GM12878 (cell line): ENCODE measurements at regions of chr11 and their contacts with region 1.

Region 1: DNA sequence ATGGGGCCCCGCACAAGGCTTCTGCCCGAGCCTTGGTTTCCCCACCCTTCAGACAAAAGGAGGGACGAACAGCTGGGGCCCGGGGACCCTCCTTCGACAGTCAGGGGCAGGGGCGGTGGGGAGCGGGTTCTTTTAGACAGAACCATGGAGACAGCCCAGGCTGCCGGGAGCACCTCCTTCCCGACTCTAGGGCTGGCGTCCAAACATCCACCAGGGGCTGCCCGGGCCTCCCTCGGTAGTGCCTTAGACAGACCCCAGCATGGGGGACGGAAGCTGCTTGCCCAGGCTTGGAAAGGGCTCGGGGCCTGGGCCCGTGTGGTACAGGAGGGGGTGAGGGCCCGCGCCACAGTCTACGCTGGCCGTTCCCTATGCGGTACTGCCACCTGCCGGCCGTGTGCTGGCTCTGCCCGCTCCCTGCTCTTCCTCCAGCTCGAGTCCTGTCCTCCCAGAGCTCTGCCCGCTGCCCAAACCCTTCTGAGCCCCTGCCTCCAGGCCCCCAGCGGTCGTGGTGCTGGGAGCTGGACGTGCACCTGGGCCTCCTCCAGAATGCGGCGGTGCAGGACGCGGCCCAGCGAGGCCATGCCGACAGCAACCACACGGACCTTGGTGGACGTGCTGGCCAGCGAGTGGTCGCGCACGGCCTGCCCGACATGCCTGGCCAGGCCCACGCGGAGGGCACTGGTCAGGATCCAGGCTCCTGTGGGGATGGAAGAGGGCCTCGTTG is 20.1 kb downstream of the TSSC4 start:
- DNase-seq: no peak
- ATAC-seq: peak; percentile 98
- H3K4me3 ChIP-seq: no peak overlapping the region
- H3K27ac ChIP-seq: no peak overlapping the region
- H3K4me1 ChIP-seq: no peaks in the 10 kb centered on the region
- H3K27me3 ChIP-seq: no peaks in the 10 kb centered on the region
- CTCF ChIP-seq: peak; percentile 75 to 94 (median 93)
- EP300 ChIP-seq: no peak
- POLR2A ChIP-seq: no peak
- RAD21 ChIP-seq: peak; percentile 85

Region 2: GRCh38 chr11:2196970-2197770 is 223.5 kb before region 1 on chr11:
- CTCF ChIA-PET with region 1: interaction called, 8 read pairs
- POLR2A ChIA-PET with region 1: no interaction called
- RAD21 ChIA-PET with region 1: interaction called, 9 read pairs
- SMC1A ChIA-PET with region 1: interaction called, 6 read pairs
- in situ Hi-C with region 1: loop called (anchors 5 kb)
- intact Hi-C with region 1: loop called (anchors 1 kb)
- DNase-seq: no peak
- ATAC-seq: peak; percentile 95
- H3K4me3 ChIP-seq: no peak overlapping the region
- H3K27ac ChIP-seq: no peak overlapping the region
- H3K4me1 ChIP-seq: no peaks in the 10 kb centered on the region
- H3K27me3 ChIP-seq: no peaks in the 10 kb centered on the region; a peak in 1 of 4 replicates
- CTCF ChIP-seq: peak; percentile 78 to 86 (median 85)
- EP300 ChIP-seq: no peak
- POLR2A ChIP-seq: no peak
- RAD21 ChIP-seq: peak; percentile 87

Region 3: DNA sequence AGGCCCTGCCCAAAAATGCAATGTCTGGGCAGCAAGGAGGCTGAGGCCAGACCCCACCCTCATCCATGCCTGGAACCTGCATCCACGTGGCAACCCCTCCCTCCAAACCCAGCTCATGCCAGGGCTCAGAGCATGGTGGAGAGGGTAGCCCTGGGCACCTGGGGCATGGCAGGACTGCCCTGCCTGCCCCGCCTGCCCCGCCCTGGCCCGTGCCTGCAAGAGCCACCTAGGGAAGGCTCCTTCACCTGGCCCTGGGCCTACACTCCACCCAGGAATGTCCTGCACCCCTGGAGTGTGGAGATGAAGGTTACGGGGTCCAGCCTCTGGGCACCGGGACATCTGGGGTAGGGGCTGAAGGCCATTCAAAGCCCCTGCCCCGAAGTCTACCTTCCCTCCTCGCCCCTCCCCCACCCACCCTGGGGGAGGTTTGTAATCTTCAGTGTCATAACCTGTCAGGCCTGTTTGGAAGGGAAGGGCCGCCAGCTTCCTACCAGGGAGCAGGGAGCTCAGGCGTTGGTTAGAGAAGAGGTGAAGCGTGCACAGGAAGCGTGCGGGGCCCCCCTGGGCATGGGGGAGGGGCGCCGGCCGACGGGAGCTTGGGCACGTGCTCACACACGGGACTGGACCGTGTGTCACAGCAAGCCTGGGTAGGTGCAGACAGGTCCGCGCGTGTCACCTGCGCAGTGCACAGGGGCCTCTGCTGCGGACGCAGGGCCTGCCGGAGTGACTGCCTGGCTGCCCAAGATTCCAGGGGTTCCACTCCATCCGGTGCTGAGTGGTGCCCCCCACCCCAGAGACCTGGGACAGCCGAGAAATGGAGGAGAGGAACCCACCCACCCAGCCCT is 218.4 kb before region 1 on chr11:
- CTCF ChIA-PET with region 1: interaction called, 6 read pairs
- POLR2A ChIA-PET with region 1: no interaction called
- RAD21 ChIA-PET with region 1: interaction called, 9 read pairs
- SMC1A ChIA-PET with region 1: interaction called, 6 read pairs
- in situ Hi-C with region 1: loop called (anchors 5 kb)
- intact Hi-C with region 1: loop called (anchors 1 kb)
- DNase-seq: no peak
- ATAC-seq: no peak
- H3K4me3 ChIP-seq: no peak overlapping the region
- H3K27ac ChIP-seq: no peak overlapping the region
- H3K4me1 ChIP-seq: no peaks in the 10 kb centered on the region
- H3K27me3 ChIP-seq: no peaks in the 10 kb centered on the region; a peak in 1 of 4 replicates
- CTCF ChIP-seq: no peak
- EP300 ChIP-seq: no peak
- POLR2A ChIP-seq: no peak
- RAD21 ChIP-seq: no peak

Region 4: DNA sequence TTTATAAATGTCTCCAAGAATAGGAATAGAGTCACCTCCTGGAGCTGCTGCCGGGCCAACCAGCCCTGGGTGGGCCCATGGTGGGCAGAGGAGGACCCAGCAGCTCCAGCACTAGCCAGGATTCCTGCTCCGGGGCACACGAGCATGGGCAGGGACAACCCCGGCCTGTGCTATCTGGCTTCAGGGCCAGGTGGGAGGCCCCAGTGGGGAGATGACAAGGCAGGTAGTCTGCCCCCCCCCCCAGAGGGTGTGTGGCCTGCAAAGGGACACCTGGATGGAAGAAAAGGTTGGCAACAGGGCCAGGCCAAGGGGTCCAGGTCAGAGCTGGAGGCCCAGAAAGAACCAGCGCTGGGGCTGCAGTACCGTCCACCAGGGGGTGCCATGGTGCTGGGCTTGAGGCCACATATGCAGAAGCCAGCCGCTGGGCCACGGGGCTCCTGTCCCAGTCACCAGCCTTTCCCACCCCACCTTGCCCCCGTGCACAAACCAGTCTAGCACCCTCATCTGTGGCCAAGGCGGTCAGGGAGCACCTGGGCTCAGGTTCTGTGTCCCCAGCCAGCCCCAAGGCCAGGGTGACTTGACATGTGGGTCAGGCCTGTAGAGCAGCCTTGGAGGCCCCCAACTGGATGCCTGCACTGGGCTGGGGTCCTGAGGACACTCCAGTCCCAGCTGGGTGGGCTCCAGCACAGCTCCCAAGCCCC is 115.4 kb before region 1 on chr11:
- CTCF ChIA-PET with region 1: interaction called, 271 read pairs
- POLR2A ChIA-PET with region 1: interaction called, 3 read pairs
- RAD21 ChIA-PET with region 1: interaction called, 187 read pairs
- SMC1A ChIA-PET with region 1: interaction called, 60 read pairs
- in situ Hi-C with region 1: loop called (anchors 5 kb)
- intact Hi-C with region 1: loop called (anchors 1 kb)
- DNase-seq: peak; percentile 4
- ATAC-seq: peak; percentile 92
- H3K4me3 ChIP-seq: no peak overlapping the region
- H3K27ac ChIP-seq: no peak overlapping the region
- H3K4me1 ChIP-seq: no peaks in the 10 kb centered on the region
- H3K27me3 ChIP-seq: no peaks in the 10 kb centered on the region; a peak in 1 of 4 replicates
- CTCF ChIP-seq: peak; percentile 76 to 93 (median 84)
- EP300 ChIP-seq: no peak
- POLR2A ChIP-seq: no peak
- RAD21 ChIP-seq: peak; percentile 87

Region 5: DNA sequence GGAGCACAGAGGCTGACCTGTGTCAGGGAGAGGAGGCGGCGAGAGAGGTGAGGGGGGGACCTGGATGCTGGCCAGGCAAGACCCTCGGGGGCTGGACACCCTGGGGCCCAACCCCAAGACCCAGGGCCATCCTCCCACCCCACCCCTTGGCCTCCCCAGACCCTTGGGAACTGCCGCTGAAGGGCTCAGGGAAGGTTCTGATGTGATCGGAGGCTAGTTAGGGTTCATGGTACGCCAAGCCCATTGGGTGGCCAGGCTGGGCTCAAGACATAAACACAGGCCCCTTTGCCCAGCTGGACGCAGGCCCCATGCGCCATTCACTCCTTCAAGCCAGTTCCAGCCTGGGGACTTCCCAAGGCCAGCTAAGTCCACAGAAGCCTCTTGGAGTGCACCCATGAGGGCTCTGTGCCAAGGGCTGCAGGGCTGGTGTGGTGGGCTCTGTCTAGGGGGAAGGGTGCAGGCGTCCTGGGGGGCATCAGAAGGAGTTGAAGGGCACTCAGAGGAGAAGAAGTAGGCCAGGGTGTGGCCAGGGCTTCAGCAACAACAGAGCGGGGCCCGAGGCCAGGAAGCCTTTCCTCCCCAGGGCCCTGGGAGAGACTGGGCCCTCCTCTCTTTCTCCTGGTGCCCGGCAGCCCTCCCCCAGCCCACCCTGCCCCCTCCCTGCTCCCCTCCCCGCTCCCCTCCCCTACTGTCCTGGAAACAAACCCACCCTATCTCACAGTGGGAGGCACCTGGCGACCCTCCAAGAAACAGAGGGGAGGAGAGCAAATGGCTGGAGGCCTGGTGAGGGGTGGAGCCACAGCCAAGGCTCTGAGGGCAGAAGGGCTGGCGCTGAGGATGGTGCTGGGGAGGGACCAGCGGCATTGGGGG is 105.9 kb before region 1 on chr11:
- CTCF ChIA-PET with region 1: interaction called, 19 read pairs
- POLR2A ChIA-PET with region 1: no interaction called
- RAD21 ChIA-PET with region 1: interaction called, 3 read pairs
- SMC1A ChIA-PET with region 1: no interaction called
- in situ Hi-C with region 1: loop called (anchors 5 kb)
- intact Hi-C with region 1: no loop called
- DNase-seq: no peak
- ATAC-seq: no peak
- H3K4me3 ChIP-seq: no peak overlapping the region
- H3K27ac ChIP-seq: no peak overlapping the region
- H3K4me1 ChIP-seq: no peaks in the 10 kb centered on the region
- H3K27me3 ChIP-seq: no peaks in the 10 kb centered on the region
- CTCF ChIP-seq: no peak
- EP300 ChIP-seq: no peak
- POLR2A ChIP-seq: no peak
- RAD21 ChIP-seq: no peak

Region 6: DNA sequence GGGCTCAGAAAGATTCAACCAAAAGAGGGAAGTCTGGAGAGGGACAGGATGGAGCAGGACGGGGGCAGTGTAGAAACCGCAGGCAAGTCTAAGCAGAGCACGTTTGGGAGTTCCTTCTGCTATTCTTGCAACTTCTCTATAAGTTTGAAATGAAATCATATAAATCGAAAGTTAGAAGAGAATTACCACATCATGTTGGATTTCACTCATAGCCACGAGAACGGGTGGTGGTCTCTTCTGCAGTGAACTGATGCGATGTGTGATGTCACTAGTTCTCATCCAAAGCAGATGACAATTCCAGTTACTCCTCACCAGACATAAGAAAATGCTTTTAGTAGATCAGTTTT is 60.2 kb after region 1 on chr11:
- CTCF ChIA-PET with region 1: no interaction called
- POLR2A ChIA-PET with region 1: no interaction called
- RAD21 ChIA-PET with region 1: no interaction called
- SMC1A ChIA-PET with region 1: no interaction called
- in situ Hi-C with region 1: no loop called
- intact Hi-C with region 1: loop called (anchors 10 kb)
- DNase-seq: no peak
- ATAC-seq: no peak
- H3K4me3 ChIP-seq: no peak overlapping the region
- H3K27ac ChIP-seq: no peak overlapping the region
- H3K4me1 ChIP-seq: no peaks in the 10 kb centered on the region
- H3K27me3 ChIP-seq: no peaks in the 10 kb centered on the region
- CTCF ChIP-seq: no peak
- EP300 ChIP-seq: no peak
- POLR2A ChIP-seq: no peak
- RAD21 ChIP-seq: no peak